ENCODE measurements at regions of chr10 and their contacts with region 1.

Region 1: DNA sequence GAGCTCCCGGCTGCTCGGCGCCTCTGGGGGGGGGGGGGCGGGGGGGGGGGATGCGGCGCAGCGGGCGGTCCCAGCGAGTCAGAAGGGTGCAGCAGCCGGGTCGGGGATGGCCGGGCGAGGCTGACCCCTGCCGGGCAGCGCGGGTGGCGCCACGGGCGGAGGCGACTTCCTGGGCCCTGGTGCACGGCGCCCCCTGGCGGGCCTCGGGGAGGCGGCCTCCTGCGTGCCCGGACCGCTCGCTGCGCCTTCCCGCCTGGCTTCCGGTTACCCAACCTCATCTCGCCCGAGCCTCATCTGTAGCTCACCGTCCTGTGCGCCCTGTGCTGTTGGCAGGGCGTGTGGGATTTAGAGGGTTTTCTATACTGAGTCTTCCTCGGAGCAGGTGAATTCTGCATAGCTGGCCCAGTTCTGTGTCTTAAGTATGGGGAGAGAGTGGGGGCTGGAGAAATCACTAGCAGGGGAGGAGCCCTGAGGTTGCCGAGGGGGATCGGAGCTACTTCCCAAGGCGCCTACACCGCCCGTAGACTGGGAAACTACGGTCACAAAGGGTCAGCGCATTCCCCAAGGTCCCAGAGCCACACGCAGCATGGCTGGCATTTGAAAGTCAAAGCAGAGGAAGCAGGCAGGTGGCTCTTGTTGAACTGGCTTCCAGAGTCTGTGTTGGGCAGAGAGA is 28.3 kb upstream of the WDFY4 start:
- DNase-seq: peak; percentile 67 to 97
- H3K4me3 ChIP-seq: peak overlapping the region; percentile 66
- H3K27ac ChIP-seq: no peak overlapping the region
- H3K4me1 ChIP-seq: peaks cover 12% of the 10 kb centered on the region; the same call in 1 of the 2 replicates
- H3K27me3 ChIP-seq: no peaks in the 10 kb centered on the region
- CTCF ChIP-seq: peak; percentile 90

Region 2: GRCh38 chr10:48215488-48216204 is 440.7 kb before region 1 on chr10:
- CTCF ChIA-PET with region 1: no interaction called
- POLR2A ChIA-PET with region 1: no interaction called
- intact Hi-C with region 1: loop called (anchors 5 kb)
- DNase-seq: peak; percentile 54 to 76
- H3K4me3 ChIP-seq: no peak overlapping the region
- H3K27ac ChIP-seq: no peak overlapping the region
- H3K4me1 ChIP-seq: no peaks in the 10 kb centered on the region
- H3K27me3 ChIP-seq: peaks cover 37% of the 10 kb centered on the region; the same call in 1 of the 2 replicates
- CTCF ChIP-seq: peak; percentile 94

Region 3: GRCh38 chr10:48333856-48334255 is 322.5 kb before region 1 on chr10:
- CTCF ChIA-PET with region 1: no interaction called
- POLR2A ChIA-PET with region 1: interaction called, 11 read pairs
- intact Hi-C with region 1: no loop called
- DNase-seq: peak in 1 of 2 experiments; percentile 86
- H3K4me3 ChIP-seq: no peak overlapping the region
- H3K27ac ChIP-seq: no peak overlapping the region
- H3K4me1 ChIP-seq: peaks cover 30% of the 10 kb centered on the region
- H3K27me3 ChIP-seq: no peaks in the 10 kb centered on the region
- CTCF ChIP-seq: no peak

Region 4: DNA sequence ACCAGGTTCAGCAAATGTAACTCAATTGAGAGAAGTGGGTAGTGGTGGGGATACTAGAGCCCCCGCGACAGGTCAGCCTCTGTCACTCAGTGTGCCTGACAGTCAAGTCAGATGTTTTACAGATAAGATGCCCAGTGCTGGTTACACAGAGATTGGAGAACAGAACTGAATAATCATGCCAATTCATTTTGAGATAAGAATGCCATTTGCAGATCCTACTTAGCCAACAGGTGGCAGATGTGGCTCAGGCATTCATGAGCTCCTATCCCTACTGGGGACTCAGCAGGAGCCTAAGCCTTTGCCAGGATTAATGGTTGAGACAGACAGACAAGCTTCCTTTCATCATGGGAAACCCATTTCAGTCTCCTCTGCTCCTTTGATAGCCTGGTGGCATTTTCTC is 212.1 kb before region 1 on chr10:
- CTCF ChIA-PET with region 1: interaction called, 33 read pairs
- POLR2A ChIA-PET with region 1: interaction called, 4 read pairs
- intact Hi-C with region 1: loop called (anchors 1 kb)
- DNase-seq: no peak
- H3K4me3 ChIP-seq: no peak overlapping the region
- H3K27ac ChIP-seq: no peak overlapping the region
- H3K4me1 ChIP-seq: no peaks in the 10 kb centered on the region
- H3K27me3 ChIP-seq: no peaks in the 10 kb centered on the region
- CTCF ChIP-seq: peak; percentile 52; the same call in 1 of the 2 replicates

Region 5: GRCh38 chr10:48608279-48608681 is 48.1 kb before region 1 on chr10:
- CTCF ChIA-PET with region 1: interaction called, 14 read pairs
- POLR2A ChIA-PET with region 1: interaction called, 5 read pairs
- intact Hi-C with region 1: loop called (anchors 1 kb)
- DNase-seq: peak in 1 of 2 experiments; percentile 44
- H3K4me3 ChIP-seq: no peak overlapping the region
- H3K27ac ChIP-seq: no peak overlapping the region
- H3K4me1 ChIP-seq: peaks cover 49% of the 10 kb centered on the region
- H3K27me3 ChIP-seq: no peaks in the 10 kb centered on the region
- CTCF ChIP-seq: peak; percentile 82

Region 6: DNA sequence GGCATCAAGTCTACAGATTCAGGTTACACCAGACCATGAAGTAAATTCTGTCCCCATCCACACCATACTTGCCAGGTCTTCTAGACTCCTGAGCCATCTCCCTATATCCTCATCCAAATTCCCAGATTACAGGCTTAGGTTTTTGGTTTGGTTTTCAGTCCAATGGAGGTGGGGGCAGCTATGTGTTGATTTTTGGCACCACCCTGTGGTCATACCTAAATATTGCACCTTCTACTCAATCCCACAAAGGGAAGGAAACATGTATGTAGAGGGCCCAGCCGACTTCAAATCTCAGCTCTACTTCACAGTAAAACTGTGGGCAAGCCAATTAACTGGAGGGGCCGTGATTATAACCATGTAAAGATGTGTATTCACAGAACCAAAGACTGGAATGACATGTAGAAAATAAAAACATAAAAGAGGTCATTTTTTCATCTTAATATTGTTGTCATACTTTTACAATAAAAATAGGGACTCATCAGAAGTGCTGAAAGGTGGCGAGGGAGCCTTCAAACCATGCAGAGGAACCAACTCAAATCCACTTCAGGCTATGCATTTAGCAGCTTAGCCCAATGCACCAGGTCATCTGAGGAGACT is 862.7 kb after region 1 on chr10:
- CTCF ChIA-PET with region 1: interaction called, 4 read pairs
- POLR2A ChIA-PET with region 1: no interaction called
- intact Hi-C with region 1: loop called (anchors 2 kb)
- DNase-seq: peak in 1 of 2 experiments; percentile 40
- H3K4me3 ChIP-seq: no peak overlapping the region
- H3K27ac ChIP-seq: no peak overlapping the region
- H3K4me1 ChIP-seq: no peaks in the 10 kb centered on the region
- H3K27me3 ChIP-seq: no peaks in the 10 kb centered on the region
- CTCF ChIP-seq: peak; percentile 94

Measured in PC-9 (cell line).